ENCODE measurements at regions of chr4 and their contacts with region 1.

Region 1: DNA sequence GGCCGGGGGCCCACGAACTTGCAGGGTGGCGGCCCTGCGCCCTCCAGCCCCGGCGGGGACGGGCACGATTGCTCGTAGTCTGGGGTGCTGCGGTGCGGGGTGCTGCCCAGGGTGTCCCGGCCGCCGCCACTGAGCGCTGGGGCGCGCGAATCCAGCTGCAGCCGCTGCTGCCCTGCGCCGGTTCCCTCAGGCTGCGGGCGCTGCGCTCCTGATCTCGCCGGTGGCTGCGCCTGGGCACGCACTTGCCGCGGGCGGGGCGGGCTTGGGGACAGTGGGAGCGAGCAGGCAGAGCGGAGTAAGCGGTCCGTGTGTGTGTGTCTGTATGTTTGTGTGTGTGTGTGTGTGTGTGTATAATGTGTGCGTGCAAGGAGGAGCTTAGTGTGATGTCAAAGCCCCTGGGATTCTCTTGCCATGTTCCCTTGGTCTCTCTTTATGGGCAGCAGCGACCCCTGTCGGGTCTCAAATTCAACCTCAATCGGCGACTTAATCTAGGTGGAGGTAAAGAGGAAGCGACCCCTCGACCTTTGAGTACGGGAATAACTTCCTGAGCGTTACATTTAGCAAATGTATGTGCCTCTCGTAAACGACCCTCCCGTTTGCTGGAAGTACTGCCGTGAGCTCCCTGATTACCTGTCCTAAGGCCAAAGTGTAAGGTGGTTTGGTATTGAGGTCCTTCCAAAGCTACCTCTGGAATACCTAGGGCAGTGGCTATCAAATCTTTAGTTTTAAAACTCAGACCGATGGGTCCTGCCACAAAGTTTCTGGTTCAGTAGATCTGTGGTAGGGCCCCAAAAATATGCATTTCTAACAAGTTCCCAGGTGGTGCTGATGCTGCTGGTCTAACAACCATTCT is at the start of gene RNF150:
- DNase-seq: peak; percentile 84
- H3K4me3 Mint-ChIP-seq: peak within 1 kb of the TSS; percentile 96
- H3K27ac Mint-ChIP-seq: no peak within 1 kb of the TSS
- H3K4me1 Mint-ChIP-seq: peaks cover 5% of the 10 kb centered on the region
- H3K27me3 Mint-ChIP-seq: peaks cover 35% of the 10 kb centered on the region
- CTCF ChIP-seq: peak; percentile 67
- total RNA-seq, gene RNF150: 0.32 and 0.44 TPM in 2 replicates

Region 2: DNA sequence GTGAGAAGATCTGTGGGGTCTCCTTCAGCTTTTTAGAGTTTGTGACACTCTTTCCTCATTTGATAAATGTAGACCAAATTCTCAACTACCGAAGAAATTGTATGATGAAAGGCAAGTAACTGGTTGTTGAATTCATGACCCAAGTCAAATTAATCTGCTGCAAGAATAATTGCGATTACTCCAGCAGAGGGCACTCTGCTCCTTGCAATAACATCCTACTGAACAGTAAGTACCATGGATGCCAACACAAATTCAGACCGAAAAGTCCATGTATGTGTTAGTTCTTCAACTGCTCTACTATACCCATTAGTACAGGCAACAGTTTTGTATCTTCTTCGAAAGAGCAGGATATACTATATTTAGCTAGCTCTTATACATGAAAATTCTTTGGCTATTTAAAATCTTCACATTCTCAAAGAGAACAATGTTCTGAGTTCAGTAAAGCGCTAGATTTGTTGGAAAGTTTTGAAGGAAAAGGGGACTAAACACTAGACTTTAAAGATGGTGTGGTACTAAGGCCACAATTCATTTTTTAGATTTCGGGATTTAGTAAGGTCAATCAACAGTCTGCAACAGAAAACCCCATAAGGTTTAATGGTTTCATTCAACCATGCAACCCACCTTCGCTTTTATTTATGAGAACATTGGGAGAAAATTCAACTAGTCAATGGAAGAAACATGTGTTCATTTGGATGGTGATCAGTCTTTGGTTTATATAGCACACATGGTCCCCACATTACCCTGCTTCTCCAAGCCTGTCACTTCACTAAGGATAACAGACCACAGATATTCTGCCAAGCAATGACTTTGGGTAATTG is 271.8 kb before region 1 on chr4:
- CTCF ChIA-PET with region 1: interaction called, 115 read pairs
- POLR2A ChIA-PET with region 1: interaction called, 4 read pairs
- intact Hi-C with region 1: loop called (anchors 1 kb)
- DNase-seq: peak; percentile 80
- H3K4me3 Mint-ChIP-seq: no peak overlapping the region
- H3K27ac Mint-ChIP-seq: no peak overlapping the region
- H3K4me1 Mint-ChIP-seq: peaks cover 8% of the 10 kb centered on the region
- H3K27me3 Mint-ChIP-seq: no peaks in the 10 kb centered on the region
- CTCF ChIP-seq: peak; percentile 60

Region 3: DNA sequence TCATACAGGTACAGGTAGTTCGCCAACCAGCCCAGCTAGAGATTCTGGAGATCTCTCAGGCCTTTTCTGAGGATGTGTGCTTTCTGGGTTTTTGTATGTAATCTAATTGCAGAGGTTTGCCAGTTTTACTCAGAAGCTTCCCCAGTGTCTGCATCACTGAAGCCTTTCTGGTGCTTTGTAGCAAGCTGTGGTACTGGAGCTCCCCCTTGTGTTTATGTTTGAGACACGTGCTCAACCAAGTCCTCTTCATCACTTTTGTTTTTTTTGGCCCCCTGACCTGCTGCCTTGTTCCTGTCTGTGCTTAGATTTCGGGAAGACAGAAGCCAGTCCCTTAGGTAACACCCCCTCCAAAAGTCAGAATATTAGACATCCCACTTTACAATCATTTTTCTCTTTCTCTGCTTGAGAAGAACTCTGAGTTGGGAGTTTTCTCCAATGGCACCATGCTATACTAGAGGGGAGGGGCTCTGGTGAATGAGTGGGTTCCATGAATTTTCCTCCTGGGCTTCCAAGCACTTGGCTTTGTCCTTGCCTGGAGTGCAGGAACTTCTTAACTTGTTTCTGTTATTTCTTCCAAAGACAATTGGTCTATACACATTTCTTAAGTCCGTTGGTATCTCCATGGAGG is 248.8 kb before region 1 on chr4:
- CTCF ChIA-PET with region 1: interaction called, 16 read pairs
- POLR2A ChIA-PET with region 1: interaction called, 4 read pairs
- intact Hi-C with region 1: loop called (anchors 1 kb)
- DNase-seq: peak; percentile 80
- H3K4me3 Mint-ChIP-seq: no peak overlapping the region
- H3K27ac Mint-ChIP-seq: no peak overlapping the region
- H3K4me1 Mint-ChIP-seq: no peaks in the 10 kb centered on the region
- H3K27me3 Mint-ChIP-seq: peaks cover 14% of the 10 kb centered on the region
- CTCF ChIP-seq: peak; percentile 75

Region 4: GRCh38 chr4:140952717-140953116 is 180.7 kb before region 1 on chr4:
- CTCF ChIA-PET with region 1: no interaction called
- POLR2A ChIA-PET with region 1: no interaction called
- intact Hi-C with region 1: loop called (anchors 1 kb)
- DNase-seq: peak; percentile 91
- H3K4me3 Mint-ChIP-seq: peak overlapping the region; percentile 52
- H3K27ac Mint-ChIP-seq: peak overlapping the region; percentile 80
- H3K4me1 Mint-ChIP-seq: peaks cover 8% of the 10 kb centered on the region
- H3K27me3 Mint-ChIP-seq: no peaks in the 10 kb centered on the region
- CTCF ChIP-seq: no peak

Region 5: GRCh38 chr4:140996766-140997165 is 136.6 kb before region 1 on chr4:
- CTCF ChIA-PET with region 1: interaction called, 9 read pairs
- POLR2A ChIA-PET with region 1: no interaction called
- intact Hi-C with region 1: loop called (anchors 2 kb)
- DNase-seq: peak; percentile 16
- H3K4me3 Mint-ChIP-seq: no peak overlapping the region
- H3K27ac Mint-ChIP-seq: peak overlapping the region; percentile 10
- H3K4me1 Mint-ChIP-seq: no peaks in the 10 kb centered on the region
- H3K27me3 Mint-ChIP-seq: no peaks in the 10 kb centered on the region
- CTCF ChIP-seq: no peak

Region 6: DNA sequence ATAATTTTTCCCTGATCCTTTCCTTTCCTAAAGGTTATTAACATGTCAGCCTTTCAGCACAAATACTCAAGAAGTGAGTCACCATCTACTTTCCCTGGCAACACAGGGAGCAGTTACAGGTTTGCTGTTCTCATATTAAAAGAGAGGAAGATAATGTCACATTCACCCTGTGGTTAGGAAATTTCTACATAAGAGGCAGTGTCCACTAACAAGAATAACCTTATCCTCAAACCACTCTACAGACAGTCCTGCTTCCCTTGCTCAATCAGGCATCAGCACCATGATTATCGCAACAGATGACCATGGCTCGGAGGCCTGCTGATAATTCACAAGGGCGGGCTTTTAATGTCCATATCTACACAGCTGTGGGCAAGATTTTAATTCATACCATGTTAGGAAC is 31.0 kb before region 1 on chr4:
- CTCF ChIA-PET with region 1: interaction called, 15 read pairs
- POLR2A ChIA-PET with region 1: interaction called, 4 read pairs
- intact Hi-C with region 1: no loop called
- DNase-seq: peak; percentile 74
- H3K4me3 Mint-ChIP-seq: no peak overlapping the region
- H3K27ac Mint-ChIP-seq: peak overlapping the region; percentile 7
- H3K4me1 Mint-ChIP-seq: peaks cover 11% of the 10 kb centered on the region
- H3K27me3 Mint-ChIP-seq: no peaks in the 10 kb centered on the region
- CTCF ChIP-seq: no peak

Region 7: GRCh38 chr4:141144207-141144606 is 10.8 kb after region 1 on chr4:
- CTCF ChIA-PET with region 1: interaction called, 13 read pairs
- POLR2A ChIA-PET with region 1: interaction called, 3 read pairs
- intact Hi-C with region 1: no loop called
- DNase-seq: no peak
- H3K4me3 Mint-ChIP-seq: no peak overlapping the region
- H3K27ac Mint-ChIP-seq: no peak overlapping the region
- H3K4me1 Mint-ChIP-seq: no peaks in the 10 kb centered on the region
- H3K27me3 Mint-ChIP-seq: no peaks in the 10 kb centered on the region
- CTCF ChIP-seq: no peak

Region 8: GRCh38 chr4:141339966-141340365 is 206.6 kb after region 1 on chr4:
- CTCF ChIA-PET with region 1: no interaction called
- POLR2A ChIA-PET with region 1: no interaction called
- intact Hi-C with region 1: no loop called
- DNase-seq: no peak
- H3K4me3 Mint-ChIP-seq: no peak overlapping the region
- H3K27ac Mint-ChIP-seq: no peak overlapping the region
- H3K4me1 Mint-ChIP-seq: peaks cover 7% of the 10 kb centered on the region
- H3K27me3 Mint-ChIP-seq: no peaks in the 10 kb centered on the region
- CTCF ChIP-seq: no peak